T-cell (primary cell): ENCODE measurements at regions of chr19 and their contacts with region 1.

Region 1: GRCh38 chr19:1113033-1113985 is 9.5 kb downstream of the GPX4 start:
- DNase-seq: peak; percentile 50 to 90 (median 81)
- ATAC-seq: peak; percentile 81 to 86 (median 84)
- H3K4me3 ChIP-seq: no peak overlapping the region
- H3K4me3 Mint-ChIP-seq: no peak overlapping the region
- H3K27ac ChIP-seq: peak overlapping the region; percentile 49
- H3K27ac Mint-ChIP-seq: peak overlapping the region; percentile 31 to 34
- H3K4me1 ChIP-seq: peaks cover 0 to 19% of the 10 kb centered on the region in 2 experiments
- H3K4me1 Mint-ChIP-seq: peaks cover 0 to 2% (median 1%) of the 10 kb centered on the region in 3 donors
- H3K27me3 ChIP-seq: no peaks in the 10 kb centered on the region
- H3K27me3 Mint-ChIP-seq: no peaks in the 10 kb centered on the region

Region 2: DNA sequence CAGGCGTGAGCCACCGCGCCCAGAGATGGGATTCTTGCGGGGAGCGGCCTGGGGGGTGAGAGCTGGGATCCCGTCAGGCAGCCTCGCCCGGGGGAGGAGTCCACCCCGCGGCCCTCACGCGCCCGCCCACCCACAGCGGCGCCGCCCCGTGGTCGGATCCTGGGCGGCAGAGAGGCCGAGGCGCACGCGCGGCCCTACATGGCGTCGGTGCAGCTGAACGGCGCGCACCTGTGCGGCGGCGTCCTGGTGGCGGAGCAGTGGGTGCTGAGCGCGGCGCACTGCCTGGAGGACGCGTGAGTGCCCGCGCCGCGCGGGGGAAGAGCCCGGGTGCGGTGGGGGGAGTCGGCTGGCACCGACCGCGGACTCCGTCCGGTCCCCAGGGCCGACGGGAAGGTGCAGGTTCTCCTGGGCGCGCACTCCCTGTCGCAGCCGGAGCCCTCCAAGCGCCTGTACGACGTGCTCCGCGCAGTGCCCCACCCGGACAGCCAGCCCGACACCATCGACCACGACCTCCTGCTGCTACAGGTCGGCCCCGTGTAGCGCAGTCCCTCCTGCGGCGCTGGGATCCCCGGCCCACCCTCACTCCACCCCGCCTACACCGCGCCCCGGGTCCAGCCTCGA is 252.7 kb before region 1 on chr19:
- CTCF ChIA-PET with region 1: no interaction called
- POLR2A ChIA-PET with region 1: no interaction called
- DNase-seq: peak in 33 of 35 experiments; percentile 20 to 82 (median 52)
- ATAC-seq: peak; percentile 46 to 52 (median 48)
- H3K4me3 ChIP-seq: peak overlapping the region in 1 of 2 donors; percentile 26
- H3K4me3 Mint-ChIP-seq: peak overlapping the region in 2 of 3 donors; percentile 19 to 45
- H3K27ac ChIP-seq: no peak overlapping the region
- H3K27ac Mint-ChIP-seq: no peak overlapping the region
- H3K4me1 ChIP-seq: peaks cover 7 to 39% of the 10 kb centered on the region in 2 experiments
- H3K4me1 Mint-ChIP-seq: peaks cover 17 to 23% (median 19%) of the 10 kb centered on the region in 3 donors
- H3K27me3 ChIP-seq: peaks cover 0 to 48% of the 10 kb centered on the region in 2 experiments
- H3K27me3 Mint-ChIP-seq: peaks cover 0 to 7% of the 10 kb centered on the region in 2 donors

Region 3: GRCh38 chr19:1027953-1028902 is 85.1 kb before region 1 on chr19:
- CTCF ChIA-PET with region 1: no interaction called
- POLR2A ChIA-PET with region 1: interaction called in 1 of 2 experiments, 10 read pairs
- DNase-seq: peak in 34 of 35 experiments; percentile 41 to 78 (median 62)
- ATAC-seq: peak; percentile 25 to 63 (median 56)
- H3K4me3 ChIP-seq: peak overlapping the region; percentile 98 to 100
- H3K4me3 Mint-ChIP-seq: peak overlapping the region; percentile 95 to 97 (median 96)
- H3K27ac ChIP-seq: peak overlapping the region; percentile 72
- H3K27ac Mint-ChIP-seq: peak overlapping the region; percentile 89 to 93
- H3K4me1 ChIP-seq: peaks cover 20 to 63% of the 10 kb centered on the region in 2 experiments
- H3K4me1 Mint-ChIP-seq: peaks cover 30 to 41% (median 31%) of the 10 kb centered on the region in 3 donors
- H3K27me3 ChIP-seq: no peaks in the 10 kb centered on the region
- H3K27me3 Mint-ChIP-seq: no peaks in the 10 kb centered on the region